ENCODE measurements at regions of chr7 and their contacts with region 1.

Region 1: DNA sequence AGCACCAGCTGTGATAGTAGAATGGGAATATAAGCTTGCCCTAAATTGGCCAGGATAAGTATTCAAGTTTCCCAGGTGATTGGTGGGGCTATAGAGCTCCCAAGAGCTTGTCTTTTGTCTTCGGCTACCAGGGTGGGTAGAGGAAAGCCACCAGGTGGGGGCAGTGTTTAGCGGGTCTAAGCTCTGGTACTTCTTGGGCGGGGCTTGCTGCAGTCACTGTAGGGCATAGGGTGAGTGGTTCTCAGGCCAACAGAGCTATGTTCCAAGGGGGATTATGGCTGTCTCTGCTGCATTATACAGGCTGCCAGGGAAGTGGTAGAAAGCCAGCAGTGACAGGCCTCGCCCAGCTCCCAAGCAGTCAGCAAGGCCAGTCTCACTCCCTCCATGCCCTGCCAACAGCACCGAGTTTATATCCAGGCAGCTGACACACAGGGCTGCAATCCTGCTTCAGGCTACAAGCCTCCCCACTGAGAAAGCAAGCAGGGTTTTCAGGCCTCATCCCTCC is 110.7 kb downstream of the ZNF467 start:
- DNase-seq: peak; percentile 67
- H3K4me3 ChIP-seq: no peak overlapping the region
- H3K27ac ChIP-seq: no peak overlapping the region
- H3K4me1 ChIP-seq: no peaks in the 10 kb centered on the region
- H3K27me3 ChIP-seq: no peaks in the 10 kb centered on the region
- CTCF ChIP-seq: peak; percentile 68 to 80

Region 2: GRCh38 chr7:149707448-149707886 is 44.8 kb after region 1 on chr7:
- CTCF ChIA-PET with region 1: interaction called, 13 read pairs
- dilution Hi-C with region 1: no loop called
- in situ Hi-C with region 1: no loop called
- intact Hi-C with region 1: loop called (anchors 2 kb)
- DNase-seq: peak; percentile 40
- H3K4me3 ChIP-seq: no peak overlapping the region
- H3K27ac ChIP-seq: no peak overlapping the region
- H3K4me1 ChIP-seq: no peaks in the 10 kb centered on the region
- H3K27me3 ChIP-seq: no peaks in the 10 kb centered on the region
- CTCF ChIP-seq: no peak

Region 3: DNA sequence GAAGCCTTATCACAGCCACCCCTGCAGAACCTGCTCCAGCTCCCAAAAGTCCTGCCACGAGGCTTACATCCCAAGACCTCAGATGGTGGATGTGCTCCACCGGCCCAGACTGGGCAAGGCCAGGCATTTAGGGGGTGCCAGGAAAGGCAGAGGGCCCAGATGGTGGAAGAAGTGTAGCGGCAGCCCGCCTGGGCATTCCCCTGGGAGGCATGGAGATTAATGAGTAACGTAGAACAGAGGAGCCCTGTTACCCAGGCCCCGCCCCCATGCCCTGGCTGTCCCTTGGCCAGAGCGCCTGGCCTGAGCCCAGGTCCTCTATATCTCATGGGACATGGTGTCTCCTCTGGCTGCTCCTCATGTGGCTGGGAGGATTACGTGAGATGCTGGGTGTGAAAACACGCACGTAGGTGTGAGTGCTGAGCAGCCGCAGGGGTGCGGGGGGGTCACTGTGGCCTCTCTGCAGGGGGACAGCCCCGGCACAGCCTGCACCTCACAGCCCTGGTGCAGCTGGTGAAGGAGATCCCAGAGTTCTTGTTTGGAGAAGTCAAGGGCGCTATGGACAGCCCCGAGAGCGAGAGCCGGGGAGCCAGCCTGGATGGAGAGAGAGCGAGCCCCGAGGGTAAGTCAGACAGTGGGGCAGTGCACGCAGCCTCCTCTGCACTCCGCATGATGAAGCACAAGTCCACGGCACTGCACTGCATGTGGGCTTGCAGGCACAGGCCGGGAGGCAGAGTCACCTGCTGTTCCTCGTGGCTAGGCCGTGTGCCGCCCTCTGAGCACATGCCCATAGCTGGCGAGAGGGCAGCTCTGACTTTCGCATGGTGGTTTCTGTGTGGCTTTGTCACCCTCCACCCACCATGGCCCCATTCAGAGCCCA is 58.0 kb after region 1 on chr7:
- CTCF ChIA-PET with region 1: no interaction called
- dilution Hi-C with region 1: loop called (anchors 10 kb)
- in situ Hi-C with region 1: no loop called
- intact Hi-C with region 1: no loop called
- DNase-seq: no peak
- H3K4me3 ChIP-seq: no peak overlapping the region
- H3K27ac ChIP-seq: no peak overlapping the region
- H3K4me1 ChIP-seq: peaks cover 22% of the 10 kb centered on the region
- H3K27me3 ChIP-seq: no peaks in the 10 kb centered on the region
- CTCF ChIP-seq: no peak

Region 4: GRCh38 chr7:149742075-149742701 is 79.5 kb after region 1 on chr7:
- CTCF ChIA-PET with region 1: interaction called, 24 read pairs
- dilution Hi-C with region 1: no loop called
- in situ Hi-C with region 1: loop called in 1 of 2 experiments (anchors 5 kb)
- intact Hi-C with region 1: loop called (anchors 1 kb)
- DNase-seq: peak; percentile 33
- H3K4me3 ChIP-seq: peak overlapping the region; percentile 2 to 12 (median 8)
- H3K27ac ChIP-seq: no peak overlapping the region
- H3K4me1 ChIP-seq: peaks cover 2% of the 10 kb centered on the region
- H3K27me3 ChIP-seq: no peaks in the 10 kb centered on the region
- CTCF ChIP-seq: peak; percentile 86 to 93

Region 5: DNA sequence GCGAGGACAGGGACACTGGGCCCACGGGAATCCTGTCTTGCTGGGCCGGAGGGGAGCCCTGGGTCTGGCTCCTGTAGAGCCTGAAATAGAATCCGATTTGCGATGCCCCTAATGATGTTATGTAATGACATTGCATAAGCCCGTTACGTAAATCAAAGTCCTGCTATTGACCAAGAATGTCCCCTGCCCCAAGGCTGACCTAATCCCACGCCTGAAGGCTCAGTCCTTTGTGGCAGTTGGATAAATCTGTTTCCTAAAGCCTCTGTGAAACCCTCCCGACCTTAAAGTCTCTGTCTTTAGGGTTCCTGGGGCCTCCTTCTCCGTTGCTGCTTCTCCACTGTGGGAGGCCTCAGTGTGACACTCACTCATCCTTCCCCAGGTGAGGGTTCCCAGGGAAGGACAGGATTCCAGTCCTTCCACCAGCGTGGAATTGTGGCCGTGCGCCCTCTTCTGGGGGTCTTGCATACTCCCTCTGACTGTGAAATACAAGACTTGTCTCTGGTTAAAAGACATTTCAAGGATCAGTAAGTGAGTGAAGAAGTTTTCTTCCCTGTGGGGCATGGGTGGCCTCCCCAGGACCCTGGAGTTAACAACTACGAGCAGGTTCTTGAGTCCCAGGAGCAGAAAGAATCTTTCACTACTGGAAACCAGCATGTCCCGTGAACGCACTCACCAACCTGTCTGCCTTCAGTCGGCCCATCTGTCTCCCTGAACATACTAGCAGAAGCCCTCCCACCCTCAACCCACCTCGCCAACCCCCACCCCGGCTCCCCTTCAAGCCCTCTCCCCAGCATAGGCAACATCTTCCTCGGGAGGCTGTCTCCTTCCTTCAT is 91.0 kb after region 1 on chr7:
- CTCF ChIA-PET with region 1: interaction called, 4 read pairs
- dilution Hi-C with region 1: loop called (anchors 5 kb)
- in situ Hi-C with region 1: no loop called
- intact Hi-C with region 1: no loop called
- DNase-seq: peak; percentile 28
- H3K4me3 ChIP-seq: no peak overlapping the region
- H3K27ac ChIP-seq: no peak overlapping the region
- H3K4me1 ChIP-seq: no peaks in the 10 kb centered on the region
- H3K27me3 ChIP-seq: no peaks in the 10 kb centered on the region
- CTCF ChIP-seq: peak; percentile 11 to 22

Region 6: GRCh38 chr7:149799397-149800171 is 136.9 kb after region 1 on chr7:
- CTCF ChIA-PET with region 1: interaction called, 3 read pairs
- dilution Hi-C with region 1: no loop called
- in situ Hi-C with region 1: no loop called
- intact Hi-C with region 1: loop called (anchors 2 kb)
- DNase-seq: no peak
- H3K4me3 ChIP-seq: no peak overlapping the region
- H3K27ac ChIP-seq: no peak overlapping the region
- H3K4me1 ChIP-seq: no peaks in the 10 kb centered on the region
- H3K27me3 ChIP-seq: no peaks in the 10 kb centered on the region
- CTCF ChIP-seq: peak in 1 of 2 donors; percentile 50

Measured in mammary epithelial cell (primary cell).